ENCODE measurements at regions of chr11 and their contacts with region 1.

Region 1: DNA sequence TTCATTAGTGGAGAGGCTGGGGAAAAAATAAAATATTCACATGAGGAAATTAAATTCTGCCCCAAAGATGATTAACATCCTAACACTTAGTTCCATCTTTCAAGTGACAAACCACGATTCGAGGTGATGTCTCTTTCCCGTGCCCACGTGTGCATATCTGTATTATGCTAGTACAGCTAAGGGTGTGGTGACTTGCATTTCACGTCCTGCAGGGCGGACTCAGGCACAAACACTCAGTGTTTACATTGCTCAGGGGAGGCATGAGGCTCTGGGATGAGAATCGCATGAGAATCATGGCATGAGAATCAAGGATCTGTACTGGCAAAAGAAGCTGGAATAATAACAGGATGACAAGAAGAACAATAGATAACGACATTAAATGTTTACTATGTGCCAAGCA is 179.4 kb downstream of the NTM start:
- DNase-seq: no peak
- ATAC-seq: no peak
- H3K4me3 ChIP-seq: no peak overlapping the region
- H3K4me3 Mint-ChIP-seq: no peak overlapping the region
- H3K27ac ChIP-seq: no peak overlapping the region
- H3K27ac Mint-ChIP-seq: no peak overlapping the region
- H3K4me1 ChIP-seq: no peaks in the 10 kb centered on the region
- H3K4me1 Mint-ChIP-seq: no peaks in the 10 kb centered on the region
- H3K27me3 ChIP-seq: no peaks in the 10 kb centered on the region
- H3K27me3 Mint-ChIP-seq: no peaks in the 10 kb centered on the region
- CTCF ChIP-seq: no peak

Region 2: DNA sequence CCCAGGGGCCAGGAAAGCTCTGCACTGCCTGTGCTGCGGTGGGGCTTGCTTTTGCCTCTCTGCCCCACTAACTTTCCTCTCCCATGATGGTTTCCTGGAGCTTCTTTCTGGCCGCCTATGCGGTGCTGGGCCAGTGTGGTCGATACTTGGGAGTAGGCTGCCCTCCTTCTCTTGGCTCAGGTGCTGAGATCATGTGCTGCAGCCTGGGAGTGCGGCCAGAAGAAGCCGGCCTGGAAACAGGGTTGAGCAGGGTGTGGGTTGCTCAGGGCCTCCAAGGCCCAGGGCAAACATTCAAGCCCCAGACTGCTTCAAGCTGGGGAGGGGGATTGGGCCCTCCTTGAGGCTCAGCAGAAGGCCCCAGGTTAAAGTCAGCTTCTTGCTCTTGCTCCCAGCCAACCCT is 54.3 kb before region 1 on chr11:
- CTCF ChIA-PET with region 1: no interaction called
- POLR2A ChIA-PET with region 1: no interaction called
- intact Hi-C with region 1: no loop called
- DNase-seq: no peak
- ATAC-seq: no peak
- H3K4me3 ChIP-seq: no peak overlapping the region
- H3K4me3 Mint-ChIP-seq: no peak overlapping the region
- H3K27ac ChIP-seq: no peak overlapping the region
- H3K27ac Mint-ChIP-seq: no peak overlapping the region
- H3K4me1 ChIP-seq: no peaks in the 10 kb centered on the region
- H3K4me1 Mint-ChIP-seq: no peaks in the 10 kb centered on the region
- H3K27me3 ChIP-seq: no peaks in the 10 kb centered on the region
- H3K27me3 Mint-ChIP-seq: no peaks in the 10 kb centered on the region
- CTCF ChIP-seq: no peak

Region 3: GRCh38 chr11:133172349-133172748 is 1622.6 kb after region 1 on chr11:
- CTCF ChIA-PET with region 1: no interaction called
- POLR2A ChIA-PET with region 1: no interaction called
- intact Hi-C with region 1: loop called in 1 of 2 experiments (anchors 5 kb)
- DNase-seq: no peak
- ATAC-seq: no peak
- H3K4me3 ChIP-seq: no peak overlapping the region
- H3K4me3 Mint-ChIP-seq: no peak overlapping the region
- H3K27ac ChIP-seq: no peak overlapping the region
- H3K27ac Mint-ChIP-seq: no peak overlapping the region
- H3K4me1 ChIP-seq: no peaks in the 10 kb centered on the region
- H3K4me1 Mint-ChIP-seq: no peaks in the 10 kb centered on the region
- H3K27me3 ChIP-seq: no peaks in the 10 kb centered on the region
- H3K27me3 Mint-ChIP-seq: peaks cover 2% of the 10 kb centered on the region
- CTCF ChIP-seq: no peak